ENCODE measurements at regions of chr1 and their contacts with region 1.

Region 1: GRCh38 chr1:84479998-84480397 is 932 bp downstream of the RPF1 start:
- DNase-seq: no peak
- H3K4me3 ChIP-seq: peak overlapping the region; percentile 57
- CTCF ChIP-seq: no peak
- POLR2A ChIP-seq: no peak

Region 2: GRCh38 chr1:83918688-83919285 is 561.2 kb before region 1 on chr1:
- intact Hi-C with region 1: no loop called
- DNase-seq: no peak
- H3K4me3 ChIP-seq: no peak overlapping the region
- CTCF ChIP-seq: no peak
- POLR2A ChIP-seq: no peak

Region 3: GRCh38 chr1:84427520-84428188 is 52.3 kb before region 1 on chr1:
- intact Hi-C with region 1: no loop called
- DNase-seq: no peak
- H3K4me3 ChIP-seq: no peak overlapping the region
- CTCF ChIP-seq: no peak
- POLR2A ChIP-seq: no peak

Region 4: GRCh38 chr1:84467298-84467697 is 12.7 kb before region 1 on chr1:
- intact Hi-C with region 1: loop called (anchors 1 kb)
- DNase-seq: no peak
- H3K4me3 ChIP-seq: no peak overlapping the region
- CTCF ChIP-seq: no peak
- POLR2A ChIP-seq: no peak

Measured in lower leg skin (tissue), 4 donors.